SK-N-SH (cell line): ENCODE measurements at regions of chr13 and their contacts with region 1.

Region 1: GRCh38 chr13:30341815-30342570 is 34.6 kb upstream of the KATNAL1 start:
- DNase-seq: peak; percentile 54
- H3K4me3 ChIP-seq: peak overlapping the region in 1 of 2 experiments; percentile 25; a peak in 2 of 4 replicates
- H3K27ac ChIP-seq: peak overlapping the region; percentile 71 to 88
- H3K4me1 ChIP-seq: peaks cover 33 to 37% of the 10 kb centered on the region in 2 experiments
- H3K27me3 ChIP-seq: no peaks in the 10 kb centered on the region
- CTCF ChIP-seq: no peak
- EP300 ChIP-seq: peak; percentile 42 to 64; a peak in 2 of 4 replicates
- RAD21 ChIP-seq: peak; percentile 35

Region 2: DNA sequence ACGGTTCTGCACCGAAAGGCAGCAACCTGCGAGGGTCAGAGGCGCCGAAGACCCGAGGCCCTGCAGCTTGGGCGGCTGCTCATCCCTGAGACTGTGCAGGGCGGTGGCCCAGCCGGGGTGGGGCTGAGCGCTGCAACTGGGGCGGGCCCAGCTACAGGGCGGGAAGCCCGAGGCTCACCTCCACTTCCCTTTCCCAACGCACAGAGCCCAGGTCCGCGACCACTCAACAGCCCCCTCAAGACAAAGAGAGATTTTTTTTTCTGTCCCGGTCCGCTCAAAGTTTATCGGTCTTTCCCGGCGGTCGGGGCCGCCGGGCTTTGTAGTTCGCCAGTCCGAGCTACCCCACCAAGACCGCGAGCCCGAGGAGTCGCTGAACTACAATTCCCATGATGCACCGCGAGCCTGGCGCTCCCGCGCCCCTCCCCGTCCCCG is 35.2 kb before region 1 on chr13:
- CTCF ChIA-PET with region 1: no interaction called
- POLR2A ChIA-PET with region 1: interaction called, 10 read pairs
- DNase-seq: peak; percentile 93
- H3K4me3 ChIP-seq: peak overlapping the region; percentile 91 to 99
- H3K27ac ChIP-seq: peak overlapping the region; percentile 78 to 94
- H3K4me1 ChIP-seq: peaks cover 16 to 27% of the 10 kb centered on the region in 2 experiments
- H3K27me3 ChIP-seq: no peaks in the 10 kb centered on the region
- CTCF ChIP-seq: no peak
- EP300 ChIP-seq: no peak
- RAD21 ChIP-seq: no peak

Region 3: DNA sequence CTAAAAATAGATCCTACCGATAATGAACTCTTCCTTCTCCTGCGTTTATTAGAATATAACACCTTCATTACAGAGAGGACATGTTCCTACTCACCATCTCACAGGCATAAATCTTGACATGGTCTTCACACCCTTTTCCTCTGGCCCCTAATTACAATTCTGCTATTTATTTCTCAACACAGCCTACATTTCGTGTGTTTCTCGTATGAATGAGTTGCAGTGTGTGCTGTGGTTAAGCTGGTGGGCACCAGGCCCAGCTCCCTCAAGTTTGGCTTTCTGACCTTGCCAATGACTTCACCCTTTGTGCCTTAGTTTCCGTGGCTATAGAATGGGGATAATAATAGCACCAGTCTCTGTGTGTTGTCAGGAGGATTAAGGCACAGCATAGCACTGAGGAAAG is 22.3 kb before region 1 on chr13:
- CTCF ChIA-PET with region 1: no interaction called
- POLR2A ChIA-PET with region 1: no interaction called
- DNase-seq: no peak
- H3K4me3 ChIP-seq: no peak overlapping the region
- H3K27ac ChIP-seq: no peak overlapping the region
- H3K4me1 ChIP-seq: no peaks in the 10 kb centered on the region; a peak in 1 of 4 replicates
- H3K27me3 ChIP-seq: no peaks in the 10 kb centered on the region
- CTCF ChIP-seq: no peak
- EP300 ChIP-seq: no peak
- RAD21 ChIP-seq: no peak

Region 4: DNA sequence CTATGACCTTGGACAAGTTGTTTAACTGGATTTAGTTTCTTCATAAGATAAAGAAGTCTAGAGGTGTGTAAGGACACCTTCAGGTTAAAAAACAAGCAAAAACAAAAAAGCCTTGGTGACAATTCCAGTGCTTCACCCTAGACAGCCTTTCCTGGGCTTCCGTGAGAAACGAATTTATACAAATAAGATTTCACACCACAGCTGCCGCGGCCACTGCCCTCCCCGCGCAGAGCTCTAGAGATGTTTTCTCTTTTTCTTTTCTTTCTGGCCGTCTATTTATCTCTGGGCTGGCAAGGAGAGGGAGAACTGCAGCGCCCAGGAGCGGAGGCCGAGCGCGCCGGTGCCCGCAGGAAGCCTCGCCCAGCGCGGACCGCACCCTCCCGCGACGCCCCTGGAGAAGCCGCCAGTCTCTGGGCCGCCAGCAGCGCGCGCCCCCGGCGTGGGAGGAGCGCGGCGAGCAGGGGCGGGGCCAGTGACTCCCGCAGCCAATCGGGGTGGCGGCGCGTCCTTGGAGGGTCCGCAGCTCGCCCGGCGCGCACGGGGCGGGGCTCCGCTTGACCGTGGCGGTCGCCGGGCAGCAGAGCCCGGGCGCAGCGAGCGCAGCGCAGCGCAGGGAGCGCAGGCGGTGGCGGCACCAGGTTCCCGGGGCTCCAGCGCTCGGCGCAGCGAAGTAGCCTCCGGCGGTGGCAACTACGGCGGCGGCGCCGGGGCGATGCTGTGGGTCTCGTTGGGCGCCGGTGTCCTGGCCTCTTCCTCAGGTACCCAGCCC is 1504.4 kb after region 1 on chr13:
- CTCF ChIA-PET with region 1: no interaction called
- POLR2A ChIA-PET with region 1: no interaction called
- DNase-seq: peak; percentile 98
- H3K4me3 ChIP-seq: peak overlapping the region; percentile 70 to 71
- H3K27ac ChIP-seq: peak overlapping the region in 1 of 2 experiments; percentile 71; a peak in 2 of 4 replicates
- H3K4me1 ChIP-seq: peaks cover 0 to 4% of the 10 kb centered on the region in 2 experiments; a peak in 1 of 4 replicates
- H3K27me3 ChIP-seq: peaks cover 4% of the 10 kb centered on the region; the same call in 1 of the 2 replicates
- CTCF ChIP-seq: no peak
- EP300 ChIP-seq: no peak
- RAD21 ChIP-seq: no peak